A673 (cell line): ENCODE measurements at regions of chr2 and their contacts with region 1.

Region 1: GRCh38 chr2:47344890-47345589 is 57.9 kb upstream of the MSH2 start:
- DNase-seq: peak; percentile 98
- H3K4me3 ChIP-seq: peak overlapping the region; percentile 41
- H3K27ac ChIP-seq: peak overlapping the region; percentile 74
- H3K4me1 ChIP-seq: peaks cover 17% of the 10 kb centered on the region
- H3K27me3 ChIP-seq: no peaks in the 10 kb centered on the region
- CTCF ChIP-seq: 0 out of 2 replicates have a peak, but pooled peaks have one; percentile 12

Region 2: GRCh38 chr2:47782671-47783485 is 437.8 kb after region 1 on chr2 and contains the start of gene MSH6:
- CTCF ChIA-PET with region 1: no interaction called
- POLR2A ChIA-PET with region 1: no interaction called
- intact Hi-C with region 1: loop called (anchors 5 kb)
- DNase-seq: peak; percentile 95
- H3K4me3 ChIP-seq: peak within 1 kb of the TSS; percentile 99
- H3K27ac ChIP-seq: peak within 1 kb of the TSS; percentile 99
- H3K4me1 ChIP-seq: peaks cover 4% of the 10 kb centered on the region
- H3K27me3 ChIP-seq: no peaks in the 10 kb centered on the region
- CTCF ChIP-seq: no peak
- total RNA-seq, gene MSH6: 182 and 189 TPM in 2 replicates